ENCODE measurements at regions of chr17 and their contacts with region 1.

Region 1: DNA sequence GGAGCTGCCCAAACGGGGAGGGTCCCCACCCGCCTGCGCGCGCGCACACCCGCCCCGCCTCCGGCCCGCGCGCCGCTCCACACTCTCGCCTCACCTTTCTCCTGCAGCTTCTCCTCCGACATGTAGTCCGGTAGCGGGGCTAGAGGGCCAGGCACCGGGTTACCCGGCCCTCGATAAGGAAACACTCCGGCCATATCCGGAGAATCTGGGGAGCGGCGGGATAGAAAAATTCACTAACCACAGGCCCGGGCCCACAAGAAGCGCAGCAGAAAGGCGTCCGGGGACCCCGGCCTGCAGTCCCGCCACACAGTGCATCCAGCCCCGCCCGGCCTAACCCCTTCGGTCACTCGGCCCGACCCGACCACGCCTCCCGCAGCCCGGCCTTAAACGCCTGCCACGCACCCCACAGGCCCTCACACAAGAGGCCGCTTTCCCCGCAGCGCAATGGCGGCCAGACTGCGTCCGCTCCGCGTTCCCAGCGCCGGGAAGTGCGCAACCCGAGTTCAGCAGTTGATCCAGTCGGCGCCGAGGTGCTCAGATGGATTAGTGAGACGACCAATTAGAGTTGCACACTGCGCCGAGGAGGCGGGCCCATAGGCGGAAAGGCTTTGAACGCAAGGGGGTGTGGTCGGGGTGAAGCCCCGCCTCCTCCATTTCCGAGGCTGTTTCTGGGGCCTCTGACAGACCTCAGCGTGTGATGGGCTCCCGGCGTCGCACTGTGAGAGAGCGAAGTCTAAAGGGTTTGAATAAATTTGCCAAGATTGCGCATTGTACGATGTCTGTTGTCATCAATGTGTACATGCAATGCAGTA is at the start of gene PRPF8:
- DNase-seq: peak; percentile 97 to 99 (median 97)
- H3K4me3 ChIP-seq: peak within 1 kb of the TSS; percentile 80
- H3K4me3 Mint-ChIP-seq: peak within 1 kb of the TSS; percentile 91 to 100 (median 99)
- H3K27ac ChIP-seq: peak within 1 kb of the TSS; percentile 94
- H3K27ac Mint-ChIP-seq: peak within 1 kb of the TSS; percentile 85 to 100 (median 99)
- H3K4me1 ChIP-seq: peaks cover 24% of the 10 kb centered on the region
- H3K4me1 Mint-ChIP-seq: peaks cover 38 to 53% (median 47%) of the 10 kb centered on the region in 3 donors
- H3K27me3 ChIP-seq: no peaks in the 10 kb centered on the region
- H3K27me3 Mint-ChIP-seq: no peaks in the 10 kb centered on the region
- total RNA-seq, gene PRPF8: 430 to 447 TPM

Region 2: DNA sequence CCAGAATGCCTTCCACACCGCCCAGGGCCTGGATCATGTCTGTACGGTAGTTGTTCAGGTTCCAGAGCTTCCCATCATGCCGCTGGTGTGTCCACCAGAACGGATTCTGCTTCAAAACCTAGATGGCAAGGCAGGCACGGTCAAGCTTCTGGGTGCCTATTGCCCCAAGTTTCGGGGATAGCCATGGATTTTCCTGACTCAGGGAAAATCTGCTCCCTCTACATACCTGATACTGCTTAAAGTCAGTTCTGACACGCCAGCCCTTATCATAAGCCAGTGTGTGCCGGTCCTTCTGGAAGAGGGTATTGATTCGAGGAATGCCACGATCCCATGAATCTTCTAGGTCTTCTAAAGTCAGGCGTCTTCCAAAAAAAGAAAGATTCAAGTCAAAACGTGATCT is 23.5 kb before region 1 on chr17:
- CTCF ChIA-PET with region 1: no interaction called
- POLR2A ChIA-PET with region 1: interaction called, 13 read pairs
- DNase-seq: no peak
- H3K4me3 ChIP-seq: no peak overlapping the region
- H3K4me3 Mint-ChIP-seq: no peak overlapping the region
- H3K27ac ChIP-seq: no peak overlapping the region
- H3K27ac Mint-ChIP-seq: peak overlapping the region in 1 of 8 donors; percentile 71
- H3K4me1 ChIP-seq: no peaks in the 10 kb centered on the region
- H3K4me1 Mint-ChIP-seq: peaks cover 2 to 9% (median 3%) of the 10 kb centered on the region in 3 donors
- H3K27me3 ChIP-seq: no peaks in the 10 kb centered on the region
- H3K27me3 Mint-ChIP-seq: no peaks in the 10 kb centered on the region

Measured in CD8-positive, alpha-beta memory T cell (primary cell).